ENCODE measurements at regions of chr1 and their contacts with region 1.

Region 1: GRCh38 chr1:197384471-197384870 is 116.4 kb downstream of the CRB1 start:
- H3K4me3 ChIP-seq: no peak overlapping the region
- H3K27ac ChIP-seq: no peak overlapping the region
- H3K4me1 ChIP-seq: no peaks in the 10 kb centered on the region
- CTCF ChIP-seq: no peak

Region 2: GRCh38 chr1:197343663-197344273 is 40.7 kb before region 1 on chr1:
- CTCF ChIA-PET with region 1: no interaction called
- POLR2A ChIA-PET with region 1: no interaction called
- H3K4me3 ChIP-seq: no peak overlapping the region
- H3K27ac ChIP-seq: no peak overlapping the region
- H3K4me1 ChIP-seq: no peaks in the 10 kb centered on the region
- CTCF ChIP-seq: no peak

Region 3: DNA sequence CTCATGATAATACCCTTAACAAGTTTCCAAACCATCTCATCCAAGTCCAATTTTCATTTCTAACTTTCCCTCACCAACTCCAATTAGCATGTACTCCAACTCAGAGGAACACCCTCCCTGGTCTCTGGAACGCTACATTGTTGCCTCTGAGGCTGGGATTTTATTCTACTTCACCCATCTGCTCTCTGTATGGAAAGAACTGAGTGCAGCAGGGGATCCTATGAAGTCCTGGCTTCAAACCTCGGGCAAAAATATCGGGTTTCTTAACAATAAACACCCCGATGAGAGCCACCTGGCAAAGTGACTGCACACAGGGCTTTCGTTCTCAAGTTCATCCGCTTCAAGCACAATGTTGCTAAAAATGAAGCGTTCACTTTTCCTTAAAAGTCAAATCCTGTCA is 16.8 kb before region 1 on chr1:
- CTCF ChIA-PET with region 1: no interaction called
- POLR2A ChIA-PET with region 1: no interaction called
- H3K4me3 ChIP-seq: no peak overlapping the region
- H3K27ac ChIP-seq: no peak overlapping the region
- H3K4me1 ChIP-seq: no peaks in the 10 kb centered on the region
- CTCF ChIP-seq: no peak

Region 4: DNA sequence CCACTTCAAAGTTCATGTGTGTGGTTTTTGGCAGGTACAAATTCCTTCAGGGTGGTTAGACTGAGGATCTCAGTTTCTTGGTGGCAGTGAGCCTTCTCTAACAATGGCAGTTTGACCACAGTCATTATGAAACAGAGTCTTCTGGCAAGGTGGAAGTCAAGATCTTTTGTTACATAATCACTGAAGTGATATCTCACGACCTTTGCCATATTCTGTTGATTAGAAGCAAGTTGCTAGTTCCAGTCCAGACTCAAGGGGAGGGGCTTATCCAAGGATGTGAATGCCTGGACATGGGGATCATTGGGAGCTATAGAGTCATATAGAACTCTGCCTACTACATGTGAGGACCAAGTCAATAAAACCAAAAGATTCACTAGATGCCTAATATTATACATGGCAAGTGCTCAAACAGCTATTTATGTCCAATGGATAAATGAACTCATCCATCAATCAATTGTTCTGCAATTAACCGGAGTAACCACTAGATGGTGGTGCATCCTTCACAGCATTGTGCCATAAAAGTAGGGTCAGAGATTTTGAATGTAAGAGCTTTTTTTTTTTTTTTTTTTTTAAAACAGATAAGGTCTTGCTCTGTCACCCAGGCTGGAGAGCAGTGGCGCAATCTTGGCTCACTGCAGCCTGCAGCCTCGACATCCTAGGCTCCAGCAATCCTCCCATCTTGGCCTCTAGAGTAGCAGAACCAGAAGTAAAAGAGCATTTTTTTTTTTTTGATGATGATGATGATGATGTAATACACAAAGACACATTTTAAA is 15.5 kb after region 1 on chr1:
- CTCF ChIA-PET with region 1: interaction called, 16 read pairs
- POLR2A ChIA-PET with region 1: no interaction called
- H3K4me3 ChIP-seq: no peak overlapping the region
- H3K27ac ChIP-seq: no peak overlapping the region
- H3K4me1 ChIP-seq: no peaks in the 10 kb centered on the region
- CTCF ChIP-seq: peak; percentile 40